Naive thymus-derived CD4-positive, alpha-beta T cell (primary cell): ENCODE measurements at regions of chr9 and their contacts with region 1.

Region 1: DNA sequence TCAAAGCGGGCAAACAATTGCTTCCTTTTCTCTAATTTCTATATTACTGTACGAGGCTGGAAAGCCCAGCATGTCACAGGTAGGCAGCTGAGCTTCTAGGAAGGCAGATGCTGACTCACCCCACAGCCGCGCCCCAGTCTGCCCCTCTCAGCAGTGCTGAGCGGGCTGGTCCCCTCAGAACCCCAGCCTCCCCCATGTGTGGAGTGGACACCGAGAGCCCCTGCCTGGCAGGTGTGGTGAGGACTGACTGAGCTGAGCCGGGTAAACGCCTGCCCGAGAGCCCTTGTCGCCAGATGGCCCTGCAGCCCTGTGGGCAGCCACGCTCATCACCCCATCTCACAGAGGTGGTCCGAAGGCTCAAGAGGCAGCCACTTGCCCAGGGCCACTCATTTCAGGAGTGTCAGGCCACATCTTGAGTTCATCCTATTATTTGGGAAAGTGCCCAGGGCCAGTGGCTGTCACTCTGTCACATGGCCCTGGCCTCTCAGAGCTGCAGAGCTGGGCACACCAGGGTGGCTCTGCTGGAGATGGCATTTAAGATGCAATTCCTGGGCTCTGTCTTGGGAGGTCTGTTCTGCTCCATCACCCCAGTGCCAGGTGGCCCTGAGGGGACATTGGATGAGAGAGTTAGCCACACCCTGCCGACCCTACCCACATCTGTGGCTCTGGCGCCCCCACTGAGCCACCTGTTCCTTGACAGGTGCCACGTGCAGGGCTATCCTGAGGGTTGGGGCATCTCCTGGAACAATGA is 12.4 kb downstream of the CARD19 start:
- DNase-seq: peak in 2 of 9 donors; percentile 6 to 59
- ATAC-seq: no peak
- H3K4me3 ChIP-seq: no peak overlapping the region
- H3K4me3 Mint-ChIP-seq: peak overlapping the region in 2 of 10 donors; percentile 39 to 56
- H3K27ac ChIP-seq: peak overlapping the region; percentile 10
- H3K27ac Mint-ChIP-seq: peak overlapping the region in 8 of 9 donors; percentile 38 to 82 (median 62)
- H3K4me1 ChIP-seq: peaks cover 15 to 34% of the 10 kb centered on the region in 2 donors
- H3K4me1 Mint-ChIP-seq: peaks cover 34 to 53% (median 48%) of the 10 kb centered on the region in 7 donors
- H3K27me3 ChIP-seq: no peaks in the 10 kb centered on the region
- H3K27me3 Mint-ChIP-seq: no peaks in the 10 kb centered on the region

Region 2: DNA sequence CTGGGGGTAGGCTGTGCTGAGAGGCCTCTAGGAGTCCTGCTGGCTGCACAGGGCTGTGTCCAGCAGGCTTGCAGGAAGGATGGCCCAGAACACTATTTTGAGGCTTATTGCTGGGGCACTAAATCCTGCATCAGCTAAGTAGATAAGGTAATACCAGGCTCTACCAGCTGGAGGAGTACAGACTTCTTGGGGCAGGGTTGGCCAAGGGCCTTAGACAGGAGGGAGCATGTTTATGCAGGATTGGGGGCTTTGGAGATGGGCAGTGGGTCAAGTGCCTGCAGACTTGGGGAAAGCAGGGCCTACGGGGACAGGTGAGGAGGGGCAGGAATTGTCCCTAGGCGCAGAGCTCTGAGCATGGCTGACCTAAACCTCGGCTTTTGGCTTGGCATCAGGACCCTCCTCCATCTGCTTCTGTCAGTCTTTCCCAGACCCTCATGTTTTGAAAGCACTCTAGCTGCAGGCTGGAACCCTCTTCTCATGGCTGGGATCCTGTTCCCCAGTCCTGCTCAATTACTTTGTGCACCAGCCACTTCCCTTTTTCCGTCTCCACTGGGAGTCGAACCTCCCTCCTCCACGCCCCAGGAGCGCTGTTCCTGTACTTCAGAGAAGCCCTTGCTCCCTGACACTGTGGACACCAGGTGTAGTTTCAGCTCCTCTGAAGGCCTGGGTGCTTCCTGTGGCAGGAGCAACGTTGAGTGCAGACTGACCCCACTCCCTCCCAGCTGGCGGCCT is 932.2 kb before region 1 on chr9:
- CTCF ChIA-PET with region 1: no interaction called
- POLR2A ChIA-PET with region 1: no interaction called
- intact Hi-C with region 1: no loop called
- DNase-seq: no peak
- ATAC-seq: no peak
- H3K4me3 ChIP-seq: no peak overlapping the region
- H3K4me3 Mint-ChIP-seq: no peak overlapping the region
- H3K27ac ChIP-seq: no peak overlapping the region
- H3K27ac Mint-ChIP-seq: no peak overlapping the region
- H3K4me1 ChIP-seq: no peaks in the 10 kb centered on the region
- H3K4me1 Mint-ChIP-seq: peaks cover 0 to 2% (median 0%) of the 10 kb centered on the region in 7 donors
- H3K27me3 ChIP-seq: no peaks in the 10 kb centered on the region
- H3K27me3 Mint-ChIP-seq: peaks cover 0 to 32% (median 0%) of the 10 kb centered on the region in 5 donors

Region 3: DNA sequence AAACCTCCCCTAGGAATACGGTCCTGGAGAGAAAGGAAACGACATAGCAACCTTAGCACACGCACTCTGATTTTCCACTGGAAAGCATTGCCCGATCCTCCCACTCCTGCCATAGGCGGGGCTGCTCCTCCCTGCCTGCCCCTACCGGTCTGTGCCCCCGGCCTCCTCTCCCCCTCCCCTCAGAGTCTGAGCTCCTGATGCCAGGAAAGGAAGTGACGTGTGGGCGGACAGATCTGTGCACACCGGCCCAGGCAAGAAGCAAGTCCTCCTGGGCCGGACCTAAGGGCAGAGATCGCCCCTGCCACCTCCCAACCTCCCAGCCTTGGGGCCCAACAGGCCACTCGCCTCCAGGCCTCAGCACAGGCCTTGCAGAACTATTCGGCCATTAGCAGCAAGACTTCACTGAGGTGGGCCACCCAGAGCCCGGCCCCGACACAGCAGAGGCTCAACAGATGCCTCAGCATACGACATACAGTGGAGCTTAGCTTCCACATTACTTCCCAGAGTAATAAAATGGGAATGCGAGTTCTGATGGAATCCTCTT is 18.4 kb after region 1 on chr9:
- CTCF ChIA-PET with region 1: interaction called, 4 read pairs
- POLR2A ChIA-PET with region 1: interaction called, 7 read pairs
- intact Hi-C with region 1: loop called in 1 of 2 experiments (anchors 2 kb)
- DNase-seq: peak in 1 of 9 donors; percentile 41
- ATAC-seq: no peak
- H3K4me3 ChIP-seq: peak overlapping the region; percentile 30
- H3K4me3 Mint-ChIP-seq: peak overlapping the region; percentile 21 to 86 (median 71)
- H3K27ac ChIP-seq: peak overlapping the region; percentile 48
- H3K27ac Mint-ChIP-seq: peak overlapping the region; percentile 41 to 93 (median 88)
- H3K4me1 ChIP-seq: peaks cover 23 to 64% of the 10 kb centered on the region in 2 donors
- H3K4me1 Mint-ChIP-seq: peaks cover 45 to 74% (median 56%) of the 10 kb centered on the region in 7 donors
- H3K27me3 ChIP-seq: no peaks in the 10 kb centered on the region
- H3K27me3 Mint-ChIP-seq: no peaks in the 10 kb centered on the region

Region 4: GRCh38 chr9:93154315-93154903 is 45.9 kb after region 1 on chr9:
- CTCF ChIA-PET with region 1: no interaction called
- POLR2A ChIA-PET with region 1: interaction called, 6 read pairs
- intact Hi-C with region 1: loop called in 1 of 2 experiments (anchors 2 kb)
- DNase-seq: peak in 5 of 9 donors; percentile 34 to 55 (median 41)
- ATAC-seq: peak; percentile 70
- H3K4me3 ChIP-seq: no peak overlapping the region
- H3K4me3 Mint-ChIP-seq: peak overlapping the region in 1 of 10 donors; percentile 7
- H3K27ac ChIP-seq: no peak overlapping the region
- H3K27ac Mint-ChIP-seq: peak overlapping the region in 5 of 9 donors; percentile 17 to 72 (median 25)
- H3K4me1 ChIP-seq: peaks cover 0 to 1% of the 10 kb centered on the region in 2 donors
- H3K4me1 Mint-ChIP-seq: peaks cover 2 to 38% (median 8%) of the 10 kb centered on the region in 7 donors
- H3K27me3 ChIP-seq: no peaks in the 10 kb centered on the region
- H3K27me3 Mint-ChIP-seq: no peaks in the 10 kb centered on the region

Region 5: GRCh38 chr9:93159601-93160471 is 51.4 kb after region 1 on chr9:
- CTCF ChIA-PET with region 1: no interaction called
- POLR2A ChIA-PET with region 1: no interaction called
- intact Hi-C with region 1: loop called (anchors 2 kb)
- DNase-seq: peak; percentile 35 to 82 (median 52)
- ATAC-seq: peak; percentile 95
- H3K4me3 ChIP-seq: no peak overlapping the region
- H3K4me3 Mint-ChIP-seq: peak overlapping the region in 1 of 10 donors; percentile 16
- H3K27ac ChIP-seq: no peak overlapping the region
- H3K27ac Mint-ChIP-seq: peak overlapping the region in 3 of 9 donors; percentile 40 to 72 (median 43)
- H3K4me1 ChIP-seq: peaks cover 0 to 5% of the 10 kb centered on the region in 2 donors
- H3K4me1 Mint-ChIP-seq: peaks cover 0 to 24% (median 8%) of the 10 kb centered on the region in 7 donors
- H3K27me3 ChIP-seq: no peaks in the 10 kb centered on the region
- H3K27me3 Mint-ChIP-seq: no peaks in the 10 kb centered on the region

Region 6: GRCh38 chr9:93288891-93289883 is 180.7 kb after region 1 on chr9:
- CTCF ChIA-PET with region 1: no interaction called
- POLR2A ChIA-PET with region 1: no interaction called
- intact Hi-C with region 1: no loop called
- DNase-seq: no peak
- ATAC-seq: peak; percentile 14
- H3K4me3 ChIP-seq: no peak overlapping the region
- H3K4me3 Mint-ChIP-seq: no peak overlapping the region
- H3K27ac ChIP-seq: no peak overlapping the region
- H3K27ac Mint-ChIP-seq: peak overlapping the region in 1 of 9 donors; percentile 50
- H3K4me1 ChIP-seq: no peaks in the 10 kb centered on the region
- H3K4me1 Mint-ChIP-seq: peaks cover 0 to 11% (median 7%) of the 10 kb centered on the region in 7 donors
- H3K27me3 ChIP-seq: no peaks in the 10 kb centered on the region
- H3K27me3 Mint-ChIP-seq: peaks cover 0 to 14% (median 0%) of the 10 kb centered on the region in 5 donors

Region 7: DNA sequence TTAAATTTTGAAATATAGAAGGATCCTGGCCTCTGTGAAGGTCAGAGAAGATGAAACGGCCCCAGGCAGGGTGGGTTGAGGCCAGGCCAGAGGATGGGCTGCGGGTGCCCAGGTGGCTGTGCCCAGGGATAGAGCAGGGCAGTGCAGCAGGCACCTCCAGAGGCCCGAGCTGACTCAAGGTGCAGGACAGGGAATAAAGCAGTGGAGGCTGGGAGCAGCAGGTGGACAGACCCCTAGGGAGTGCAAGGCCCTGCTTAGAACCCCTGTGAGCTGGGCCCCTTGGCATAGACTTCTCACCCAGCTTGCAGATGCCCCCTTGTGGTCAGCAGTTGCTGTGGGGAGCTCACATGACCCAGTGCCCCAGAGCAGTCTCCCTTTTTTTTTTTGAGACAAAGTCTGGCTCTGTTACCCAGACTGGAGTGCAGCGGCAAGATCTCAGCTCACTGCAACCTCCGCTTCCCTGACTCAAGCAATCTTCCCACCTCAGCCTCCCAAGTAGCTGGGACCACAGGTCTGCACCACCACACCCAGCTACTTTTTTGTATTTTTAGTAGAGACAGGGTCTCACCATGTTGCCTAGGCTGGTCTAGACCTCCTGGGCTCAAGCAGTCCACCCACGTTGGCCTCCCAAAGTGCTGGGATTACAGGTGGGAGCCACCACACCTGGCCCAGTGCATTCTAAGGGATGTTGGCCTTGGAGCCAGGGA is 194.2 kb after region 1 on chr9:
- CTCF ChIA-PET with region 1: interaction called, 14 read pairs
- POLR2A ChIA-PET with region 1: no interaction called
- intact Hi-C with region 1: loop called (anchors 1 kb)
- DNase-seq: peak in 8 of 9 donors; percentile 39 to 76 (median 66)
- ATAC-seq: peak; percentile 82
- H3K4me3 ChIP-seq: no peak overlapping the region
- H3K4me3 Mint-ChIP-seq: no peak overlapping the region
- H3K27ac ChIP-seq: no peak overlapping the region
- H3K27ac Mint-ChIP-seq: peak overlapping the region in 1 of 9 donors; percentile 36
- H3K4me1 ChIP-seq: no peaks in the 10 kb centered on the region
- H3K4me1 Mint-ChIP-seq: peaks cover 0 to 13% (median 5%) of the 10 kb centered on the region in 7 donors
- H3K27me3 ChIP-seq: no peaks in the 10 kb centered on the region
- H3K27me3 Mint-ChIP-seq: peaks cover 0 to 3% (median 0%) of the 10 kb centered on the region in 5 donors